Adrenal gland (tissue), 19 donors: ENCODE measurements at regions of chr12 and their contacts with region 1.

Region 1: DNA sequence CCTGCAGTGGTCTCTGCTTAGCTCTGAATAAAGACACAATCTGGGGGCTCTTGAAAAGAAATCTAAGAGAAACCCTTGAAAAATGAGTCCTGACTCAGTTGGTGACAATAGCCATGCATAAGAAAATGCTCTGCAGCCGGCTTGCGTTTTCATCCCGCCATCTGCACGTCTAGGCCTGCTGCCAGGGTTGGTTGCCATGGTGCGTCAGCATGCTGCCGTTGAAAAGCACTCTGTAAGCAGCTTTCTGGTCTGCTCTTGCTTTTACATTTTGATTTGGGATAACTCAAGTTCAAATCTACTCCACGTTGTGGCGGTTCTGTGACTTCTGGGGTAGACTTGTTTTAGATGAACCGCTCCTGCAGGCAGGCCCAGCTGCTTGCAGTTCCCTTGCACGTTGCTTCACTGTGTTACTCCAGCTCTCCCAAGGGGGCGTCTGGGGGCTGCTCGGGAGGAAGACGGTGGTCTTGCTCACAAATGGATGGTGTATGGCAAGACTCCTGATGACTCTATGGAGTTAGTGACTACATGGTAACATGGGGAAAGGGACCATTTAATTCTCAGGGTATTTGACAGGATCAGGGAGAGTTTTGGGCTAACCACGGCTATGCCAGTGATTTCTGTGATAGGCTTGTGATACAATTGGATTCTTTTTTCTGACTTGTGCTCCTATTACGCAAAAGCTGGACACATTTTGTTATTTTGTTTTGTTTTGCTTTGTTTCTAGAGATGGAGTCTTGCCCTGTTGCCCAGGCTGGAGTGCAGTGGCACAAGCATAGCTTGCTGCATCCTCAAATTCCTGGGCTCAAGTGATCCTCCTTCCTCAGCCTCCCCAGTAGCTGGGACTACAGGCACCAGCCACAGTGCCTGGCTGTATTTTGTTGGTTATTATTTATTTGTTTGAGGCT is 15.8 kb downstream of the WNT5B start:
- DNase-seq: peak; percentile 79 to 95 (median 86)
- H3K4me3 ChIP-seq: no peak overlapping the region
- H3K27ac ChIP-seq: no peak overlapping the region
- H3K4me1 ChIP-seq: peaks cover 7 to 9% of the 10 kb centered on the region in 2 donors
- H3K27me3 ChIP-seq: no peaks in the 10 kb centered on the region
- CTCF ChIP-seq: no peak
- POLR2A ChIP-seq: no peak

Region 2: DNA sequence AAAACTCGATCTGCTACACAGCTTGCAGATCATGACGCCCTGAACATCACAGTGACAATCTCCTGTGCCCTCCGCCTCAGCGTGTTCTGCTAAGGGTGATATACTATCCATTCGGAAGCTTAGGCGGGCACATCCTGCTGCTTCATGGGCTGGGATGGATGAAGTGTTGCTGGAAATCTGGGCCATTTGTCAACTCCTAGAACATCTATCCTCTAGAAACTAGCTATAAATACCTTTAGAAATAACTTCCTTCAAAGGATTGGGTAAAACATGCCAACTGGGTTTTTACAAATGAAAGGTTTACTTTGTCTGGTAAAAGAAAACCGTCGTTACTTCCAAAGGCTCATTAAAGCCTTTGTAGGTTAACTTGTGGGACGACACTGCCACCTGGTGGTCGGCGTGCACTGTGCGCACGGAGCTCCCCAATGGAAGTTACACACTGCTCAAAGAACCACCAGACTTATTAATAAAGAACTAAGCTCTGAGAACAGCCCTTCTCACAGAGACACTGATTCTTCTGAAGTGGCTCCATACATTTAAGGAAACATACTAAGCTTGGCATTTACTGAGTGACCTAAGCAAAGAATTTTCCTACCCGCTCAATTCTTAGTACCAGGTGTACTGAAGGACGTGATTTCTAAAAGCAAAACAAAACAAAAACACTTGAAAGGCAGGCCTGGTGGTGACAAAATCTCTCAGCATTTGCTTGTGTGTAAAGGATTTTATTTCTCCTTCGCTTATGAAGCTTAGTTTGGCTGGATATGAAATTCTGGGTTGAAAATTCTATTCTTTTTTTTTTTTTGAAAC is 295.2 kb after region 1 on chr12:
- intact Hi-C with region 1: loop called in 1 of 2 experiments (anchors 10 kb)
- DNase-seq: peak; percentile 84 to 96 (median 89)
- H3K4me3 ChIP-seq: no peak overlapping the region
- H3K27ac ChIP-seq: peak overlapping the region in 1 of 5 donors; percentile 12
- H3K4me1 ChIP-seq: peaks cover 14 to 19% of the 10 kb centered on the region in 2 donors
- H3K27me3 ChIP-seq: no peaks in the 10 kb centered on the region
- CTCF ChIP-seq: peak; percentile 89 to 97 (median 96)
- POLR2A ChIP-seq: no peak